Vagina (tissue), 2 donors: ENCODE measurements at regions of chr18 and their contacts with region 1.

Region 1: GRCh38 chr18:75249672-75250470 is 39.3 kb downstream of the TSHZ1 start:
- DNase-seq: no peak
- H3K4me3 ChIP-seq: no peak overlapping the region
- H3K27ac ChIP-seq: peak overlapping the region; percentile 89
- H3K4me1 ChIP-seq: peaks cover 86% of the 10 kb centered on the region
- H3K27me3 ChIP-seq: no peaks in the 10 kb centered on the region
- CTCF ChIP-seq: no peak
- POLR2A ChIP-seq: no peak

Region 2: DNA sequence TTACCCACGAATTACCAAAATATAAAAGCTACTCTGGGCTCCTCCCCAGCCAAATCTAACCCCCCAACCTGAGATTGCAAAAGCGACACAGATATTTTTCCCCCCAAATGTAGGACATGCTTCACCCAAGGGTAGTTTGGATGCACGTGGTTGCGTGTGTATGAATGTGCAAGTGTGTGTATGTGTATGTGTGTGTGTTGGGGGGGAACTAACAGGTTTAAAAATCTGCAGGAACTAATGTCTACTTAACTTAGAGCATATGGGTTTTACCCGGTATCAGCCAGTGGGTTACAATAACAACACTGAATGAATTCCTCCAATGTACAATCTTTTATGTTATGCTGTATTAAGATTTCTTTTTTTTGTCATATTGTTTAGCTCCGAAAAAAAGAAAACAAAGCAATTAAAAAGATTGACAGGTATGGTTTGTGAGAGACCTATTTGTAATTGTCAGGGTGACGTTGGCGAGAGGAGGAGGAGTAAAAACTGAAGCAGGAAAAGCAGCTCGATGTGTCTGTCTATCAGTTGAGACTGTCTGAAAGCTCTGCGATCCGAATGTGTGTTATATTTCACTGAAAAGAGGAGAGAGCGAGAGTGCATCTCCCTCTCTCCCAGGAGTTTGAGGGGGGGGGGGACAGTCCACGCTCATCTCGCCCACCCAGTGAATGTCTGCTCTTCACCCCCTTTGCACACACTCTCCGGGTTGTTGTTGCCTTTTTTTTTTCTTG is 39.4 kb before region 1 on chr18 and contains the start of gene TSHZ1:
- intact Hi-C with region 1: loop called (anchors 5 kb)
- DNase-seq: peak in 1 of 2 donors; percentile 90
- H3K4me3 ChIP-seq: peak within 1 kb of the TSS; percentile 74 to 91
- H3K27ac ChIP-seq: peak within 1 kb of the TSS; percentile 96
- H3K4me1 ChIP-seq: peaks cover 55% of the 10 kb centered on the region
- H3K27me3 ChIP-seq: no peaks in the 10 kb centered on the region
- CTCF ChIP-seq: no peak
- POLR2A ChIP-seq: peak in 1 of 2 donors; percentile 89
- total RNA-seq, gene TSHZ1: 23.3 TPM

Region 3: DNA sequence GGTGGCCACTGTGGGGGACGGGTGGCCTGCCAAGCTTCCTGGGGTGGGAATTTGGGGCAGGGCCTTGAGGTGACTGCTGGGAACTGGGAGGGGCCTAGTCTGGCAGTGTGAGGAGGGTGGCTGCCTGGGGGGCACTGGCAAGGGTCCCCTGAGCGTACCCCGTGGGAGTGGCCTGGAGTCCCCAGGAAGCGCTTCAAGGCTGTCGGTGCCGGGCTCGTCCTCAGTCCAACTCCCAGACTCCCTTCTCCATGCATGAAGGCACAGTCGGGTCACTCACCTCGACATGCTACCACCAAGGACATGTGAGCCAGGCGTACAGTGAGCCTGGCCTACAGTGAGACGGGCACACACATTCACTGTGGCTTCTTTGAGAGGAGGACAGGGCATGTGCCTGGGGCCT is 72.3 kb after region 1 on chr18:
- intact Hi-C with region 1: no loop called
- DNase-seq: no peak
- H3K4me3 ChIP-seq: no peak overlapping the region
- H3K27ac ChIP-seq: no peak overlapping the region
- H3K4me1 ChIP-seq: no peaks in the 10 kb centered on the region
- H3K27me3 ChIP-seq: no peaks in the 10 kb centered on the region
- CTCF ChIP-seq: no peak
- POLR2A ChIP-seq: no peak

Region 4: DNA sequence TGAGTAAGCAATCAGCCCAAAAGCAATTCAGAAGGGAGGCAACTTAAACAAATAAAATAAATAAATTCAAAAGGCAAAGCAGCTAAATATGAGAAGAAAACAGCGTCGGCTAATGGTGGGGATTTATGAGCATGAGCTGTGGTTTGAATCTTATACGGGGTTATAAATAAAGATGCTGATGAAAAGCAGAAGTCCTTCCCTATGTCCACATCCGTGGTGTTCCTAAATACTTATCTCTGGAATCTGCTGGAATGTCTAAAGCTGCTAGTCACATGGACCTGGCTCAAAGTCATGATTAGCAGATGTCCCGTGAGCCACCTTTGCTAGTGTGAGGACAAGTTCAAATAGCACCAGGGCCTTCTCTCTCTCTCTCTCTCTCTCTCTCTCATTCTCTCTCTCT is 143.8 kb after region 1 on chr18:
- intact Hi-C with region 1: no loop called
- DNase-seq: no peak
- H3K4me3 ChIP-seq: no peak overlapping the region
- H3K27ac ChIP-seq: no peak overlapping the region
- H3K4me1 ChIP-seq: peaks cover 7% of the 10 kb centered on the region
- H3K27me3 ChIP-seq: no peaks in the 10 kb centered on the region
- CTCF ChIP-seq: no peak
- POLR2A ChIP-seq: no peak

Region 5: GRCh38 chr18:75500545-75500944 is 250.7 kb after region 1 on chr18:
- intact Hi-C with region 1: no loop called
- DNase-seq: no peak
- H3K4me3 ChIP-seq: no peak overlapping the region
- H3K27ac ChIP-seq: no peak overlapping the region
- H3K4me1 ChIP-seq: no peaks in the 10 kb centered on the region
- H3K27me3 ChIP-seq: no peaks in the 10 kb centered on the region
- CTCF ChIP-seq: no peak
- POLR2A ChIP-seq: no peak